Activated CD4-positive, alpha-beta T cell treated with anti-CD3 and anti-CD28 coated beads, Interleukin-2, amount 10 ng/mL, durations not matched to agents 24 days and 14 days (primary cell): ENCODE measurements at regions of chr1 and their contacts with region 1.

Region 1: GRCh38 chr1:156385534-156386031 is 16.6 kb downstream of the RHBG start:
- DNase-seq: peak; percentile 92
- H3K4me3 Mint-ChIP-seq: no peak overlapping the region
- H3K27ac Mint-ChIP-seq: no peak overlapping the region
- H3K4me1 Mint-ChIP-seq: peaks cover 4% of the 10 kb centered on the region
- H3K27me3 Mint-ChIP-seq: peaks cover 40% of the 10 kb centered on the region

Region 2: DNA sequence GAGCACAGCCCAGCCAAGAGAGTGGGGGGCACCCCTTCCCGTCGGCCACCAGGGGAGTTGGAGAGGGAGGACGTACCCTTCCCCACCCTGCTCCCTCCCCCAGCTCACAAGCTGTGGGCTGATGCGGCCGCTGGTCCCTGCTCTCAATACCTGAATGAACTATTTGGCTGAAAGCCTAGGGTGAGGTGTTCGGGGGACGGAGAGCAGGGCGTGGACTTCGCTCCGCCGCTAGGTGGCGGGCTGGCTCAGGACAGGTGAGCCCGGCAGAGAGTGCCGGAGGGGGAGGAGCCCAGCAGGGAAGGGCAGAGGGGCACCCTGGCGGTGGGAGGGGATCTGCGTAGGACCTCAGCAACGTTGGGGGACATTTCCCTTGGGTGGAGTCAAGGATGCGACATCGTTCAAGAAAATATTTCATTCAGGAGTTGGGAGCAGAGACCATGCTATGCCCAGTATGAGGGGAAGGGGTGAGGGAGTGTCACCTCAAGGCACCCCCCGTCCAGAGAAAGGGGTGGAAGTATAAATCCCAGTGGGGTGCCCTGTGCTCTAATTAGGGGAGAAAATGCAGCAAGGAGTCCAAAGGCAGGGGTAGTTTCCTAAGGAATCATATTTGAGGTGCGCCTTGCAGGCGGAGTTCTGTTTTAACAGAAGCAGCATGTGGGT is 28.6 kb before region 1 on chr1:
- intact Hi-C with region 1: no loop called
- DNase-seq: peak; percentile 92
- H3K4me3 Mint-ChIP-seq: no peak overlapping the region
- H3K27ac Mint-ChIP-seq: no peak overlapping the region
- H3K4me1 Mint-ChIP-seq: peaks cover 3% of the 10 kb centered on the region
- H3K27me3 Mint-ChIP-seq: peaks cover 45% of the 10 kb centered on the region

Region 3: DNA sequence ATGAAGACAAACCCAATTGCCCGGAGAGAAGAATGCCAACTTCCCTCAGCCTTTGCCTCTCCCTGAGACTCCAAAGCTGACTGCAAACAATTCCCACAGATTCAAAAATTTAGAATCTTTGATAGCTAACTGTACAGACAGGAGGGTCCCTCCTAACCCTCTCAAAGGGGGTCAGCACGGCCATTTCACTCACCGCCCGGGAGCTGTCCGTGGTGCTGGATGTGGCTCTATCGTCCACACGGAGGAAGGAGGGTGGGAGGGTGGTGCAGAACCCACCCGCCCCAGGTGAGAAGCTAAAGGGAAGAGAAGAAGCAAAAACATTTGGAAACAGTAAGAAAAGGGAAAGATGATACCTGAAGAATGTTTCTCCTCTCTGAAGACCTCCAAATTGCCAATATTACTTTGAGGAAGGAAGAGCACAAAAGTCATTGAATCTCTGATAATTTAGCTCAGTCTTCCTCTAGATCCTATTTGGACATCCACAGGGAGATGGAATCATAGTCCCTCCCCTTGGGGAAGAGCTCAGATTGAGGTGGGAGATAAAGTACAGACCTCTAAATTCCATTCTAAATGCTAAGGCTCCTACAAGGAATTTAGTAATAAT is 29.0 kb after region 1 on chr1:
- intact Hi-C with region 1: no loop called
- DNase-seq: peak; percentile 79
- H3K4me3 Mint-ChIP-seq: no peak overlapping the region
- H3K27ac Mint-ChIP-seq: no peak overlapping the region
- H3K4me1 Mint-ChIP-seq: no peaks in the 10 kb centered on the region
- H3K27me3 Mint-ChIP-seq: peaks cover 68% of the 10 kb centered on the region

Region 4: DNA sequence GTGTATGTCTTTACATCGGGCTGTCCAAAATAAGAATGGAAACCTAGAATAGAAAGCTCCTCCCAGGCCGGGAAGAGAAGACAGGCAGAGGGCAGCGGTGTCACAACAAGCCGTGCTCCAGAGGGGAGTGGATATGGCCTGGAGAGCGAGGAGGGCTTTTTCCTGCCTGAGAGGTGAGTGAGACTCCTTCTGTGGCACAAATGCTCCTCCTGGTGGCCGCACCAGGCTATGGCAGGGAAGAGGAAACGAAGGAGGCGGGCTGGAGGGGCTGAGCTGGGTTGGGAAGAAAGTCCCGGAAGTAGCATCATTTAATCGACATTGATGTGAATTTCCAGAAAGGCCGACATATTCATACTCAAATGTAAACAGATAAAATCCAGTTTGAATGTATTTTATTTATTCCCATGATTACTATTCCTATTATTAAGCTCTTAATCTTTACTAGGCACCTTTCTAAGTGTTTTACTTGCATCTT is 60.2 kb after region 1 on chr1:
- intact Hi-C with region 1: loop called (anchors 1 kb)
- DNase-seq: peak; percentile 94
- H3K4me3 Mint-ChIP-seq: no peak overlapping the region
- H3K27ac Mint-ChIP-seq: no peak overlapping the region
- H3K4me1 Mint-ChIP-seq: peaks cover 19% of the 10 kb centered on the region
- H3K27me3 Mint-ChIP-seq: peaks cover 64% of the 10 kb centered on the region